ENCODE measurements at regions of chrX and their contacts with region 1.

Region 1: DNA sequence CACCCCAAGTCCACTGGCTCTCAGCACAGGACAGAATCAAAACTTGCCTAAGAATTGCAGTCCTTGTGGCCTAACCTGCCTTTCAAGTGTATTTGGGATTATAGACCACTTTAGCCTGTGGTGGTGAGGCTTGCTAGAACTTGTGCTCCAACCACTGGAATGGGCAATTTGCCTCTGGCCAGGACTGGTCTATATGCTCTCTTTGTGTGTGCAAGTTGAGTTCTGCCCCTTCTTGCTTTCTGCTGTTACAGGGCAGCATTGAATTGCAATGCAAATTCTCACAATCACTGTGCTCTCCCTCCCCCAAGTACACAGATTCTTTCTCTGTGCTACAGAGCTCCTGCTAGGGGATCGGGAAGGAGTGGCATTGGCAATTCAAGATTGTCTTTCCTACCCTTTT is 233.6 kb upstream of the DIPK2B start:
- DNase-seq: peak; percentile 95
- H3K4me3 ChIP-seq: no peak overlapping the region
- H3K27ac ChIP-seq: peak overlapping the region; percentile 48
- H3K4me1 ChIP-seq: peaks cover 27% of the 10 kb centered on the region
- H3K27me3 ChIP-seq: no peaks in the 10 kb centered on the region
- CTCF ChIP-seq: no peak

Region 2: GRCh38 chrX:45344594-45344993 is 89.6 kb before region 1 on chrX:
- CTCF ChIA-PET with region 1: no interaction called
- dilution Hi-C with region 1: no loop called
- in situ Hi-C with region 1: no loop called
- intact Hi-C with region 1: loop called (anchors 5 kb)
- DNase-seq: no peak
- H3K4me3 ChIP-seq: no peak overlapping the region
- H3K27ac ChIP-seq: no peak overlapping the region
- H3K4me1 ChIP-seq: peaks cover 4% of the 10 kb centered on the region
- H3K27me3 ChIP-seq: no peaks in the 10 kb centered on the region
- CTCF ChIP-seq: no peak

Region 3: DNA sequence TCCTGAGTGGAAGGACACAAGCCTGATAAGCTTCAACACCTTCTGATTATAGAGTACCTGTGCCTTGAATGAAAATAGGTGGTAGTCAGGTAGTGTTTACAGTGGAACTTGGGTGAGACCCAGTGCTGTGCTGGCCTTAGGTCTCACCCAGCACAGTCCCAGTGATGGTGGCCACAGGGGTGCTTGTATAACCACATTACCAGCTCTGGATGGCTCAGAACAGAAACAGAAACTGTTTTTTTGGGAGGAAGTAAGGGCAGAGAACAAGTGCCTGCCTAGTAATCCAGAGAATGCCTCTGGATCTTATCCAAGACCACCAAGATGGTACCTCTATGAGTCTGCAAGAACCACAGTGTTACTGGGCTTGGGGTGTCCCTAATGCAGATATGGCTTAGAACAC is 62.1 kb before region 1 on chrX:
- CTCF ChIA-PET with region 1: no interaction called
- dilution Hi-C with region 1: loop called (anchors 5 kb)
- in situ Hi-C with region 1: no loop called
- intact Hi-C with region 1: no loop called
- DNase-seq: no peak
- H3K4me3 ChIP-seq: no peak overlapping the region
- H3K27ac ChIP-seq: no peak overlapping the region
- H3K4me1 ChIP-seq: no peaks in the 10 kb centered on the region
- H3K27me3 ChIP-seq: no peaks in the 10 kb centered on the region
- CTCF ChIP-seq: no peak

Region 4: DNA sequence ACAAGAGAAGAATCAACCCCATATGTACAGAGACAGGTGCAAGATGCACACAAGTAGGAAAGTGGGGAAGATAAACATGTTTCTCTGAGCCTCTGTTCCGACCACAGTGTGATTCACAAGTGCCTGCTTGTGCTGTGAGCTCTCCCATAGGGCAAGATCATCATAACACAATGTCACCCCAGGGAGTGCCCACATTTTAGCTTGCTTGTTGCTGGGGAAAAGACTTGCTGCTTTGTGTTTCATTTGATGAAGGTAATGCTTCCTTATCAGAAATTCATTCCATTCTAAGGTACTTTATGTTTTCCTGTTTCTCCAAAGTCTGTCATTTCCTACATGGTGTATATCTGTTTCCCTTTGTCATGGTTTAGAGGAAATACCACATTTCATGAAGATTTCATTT is 71.0 kb after region 1 on chrX:
- CTCF ChIA-PET with region 1: no interaction called
- dilution Hi-C with region 1: no loop called
- in situ Hi-C with region 1: no loop called
- intact Hi-C with region 1: loop called (anchors 2 kb)
- DNase-seq: peak; percentile 91
- H3K4me3 ChIP-seq: peak overlapping the region in 1 of 3 experiments; percentile 3
- H3K27ac ChIP-seq: peak overlapping the region; percentile 92
- H3K4me1 ChIP-seq: peaks cover 38% of the 10 kb centered on the region
- H3K27me3 ChIP-seq: no peaks in the 10 kb centered on the region
- CTCF ChIP-seq: no peak